Ovary (tissue), 10 donors: ENCODE measurements at regions of chr5 and their contacts with region 1.

Region 1: GRCh38 chr5:68953875-68954617 is 139.8 kb upstream of the SLC30A5 start:
- DNase-seq: peak in 3 of 5 donors; percentile 30 to 51 (median 41)
- H3K4me3 ChIP-seq: no peak overlapping the region
- H3K27ac ChIP-seq: peak overlapping the region in 1 of 2 donors; percentile 60
- H3K4me1 ChIP-seq: peaks cover 9% of the 10 kb centered on the region
- H3K27me3 ChIP-seq: no peaks in the 10 kb centered on the region
- CTCF ChIP-seq: no peak
- EP300 ChIP-seq: no peak
- POLR2A ChIP-seq: no peak

Region 2: DNA sequence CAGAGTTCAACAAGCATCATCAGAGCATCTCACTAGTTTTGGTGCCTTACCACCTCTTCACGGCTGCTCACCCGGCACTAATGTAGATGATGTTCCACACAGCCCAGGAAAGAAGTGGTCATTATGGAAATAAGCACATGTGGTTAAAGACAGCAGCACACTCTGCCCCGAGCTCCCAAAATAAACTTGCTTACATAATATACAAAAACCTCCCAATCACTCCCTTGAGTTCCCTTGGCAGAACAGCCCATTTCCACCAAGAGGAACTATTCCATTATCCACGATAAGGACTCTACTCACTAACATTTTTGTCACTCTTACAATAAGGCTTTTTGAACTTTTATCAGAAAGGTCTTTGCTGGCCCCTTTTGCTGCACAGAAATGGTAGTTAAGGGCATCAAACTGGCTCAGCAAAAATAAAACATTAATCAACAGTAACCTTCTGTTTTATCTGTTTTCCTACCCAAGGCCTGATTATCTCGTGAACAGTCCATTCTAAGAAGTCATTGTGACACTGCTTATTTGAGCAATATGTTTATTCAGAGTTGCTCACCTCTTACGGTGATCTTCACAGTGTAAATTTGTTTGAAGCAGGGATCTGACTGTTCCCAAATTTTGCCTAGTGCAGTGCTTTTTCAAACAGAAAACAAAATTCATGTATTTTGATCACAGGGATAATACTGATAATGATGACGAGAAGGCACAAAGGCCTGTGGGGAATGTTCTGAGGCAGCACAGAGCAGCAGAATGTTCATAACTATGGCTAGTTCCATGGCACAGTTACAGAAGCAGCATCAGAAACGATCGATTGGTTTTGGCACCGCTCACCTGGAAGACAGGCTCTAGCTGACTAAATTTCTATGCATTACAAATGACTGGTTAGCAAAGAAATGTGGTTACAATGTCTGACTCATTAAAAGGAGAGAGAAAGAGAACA is 1138.3 kb before region 1 on chr5:
- intact Hi-C with region 1: loop called in 1 of 4 experiments (anchors 10 kb)
- DNase-seq: peak in 3 of 5 donors; percentile 21 to 41 (median 40)
- H3K4me3 ChIP-seq: no peak overlapping the region
- H3K27ac ChIP-seq: no peak overlapping the region
- H3K4me1 ChIP-seq: peaks cover 3% of the 10 kb centered on the region
- H3K27me3 ChIP-seq: no peaks in the 10 kb centered on the region
- CTCF ChIP-seq: no peak
- EP300 ChIP-seq: no peak
- POLR2A ChIP-seq: no peak

Region 3: GRCh38 chr5:68433923-68434879 is 519.8 kb before region 1 on chr5:
- intact Hi-C with region 1: loop called in 1 of 4 experiments (anchors 10 kb)
- DNase-seq: peak; percentile 16 to 59 (median 37)
- H3K4me3 ChIP-seq: no peak overlapping the region
- H3K27ac ChIP-seq: no peak overlapping the region
- H3K4me1 ChIP-seq: peaks cover 5% of the 10 kb centered on the region
- H3K27me3 ChIP-seq: no peaks in the 10 kb centered on the region
- CTCF ChIP-seq: no peak
- EP300 ChIP-seq: peak; percentile 36
- POLR2A ChIP-seq: no peak